Activated CD4-positive, alpha-beta T cell treated with anti-CD3 and anti-CD28 coated beads for 36 hours (primary cell): ENCODE measurements at regions of chr15 and their contacts with region 1.

Region 1: DNA sequence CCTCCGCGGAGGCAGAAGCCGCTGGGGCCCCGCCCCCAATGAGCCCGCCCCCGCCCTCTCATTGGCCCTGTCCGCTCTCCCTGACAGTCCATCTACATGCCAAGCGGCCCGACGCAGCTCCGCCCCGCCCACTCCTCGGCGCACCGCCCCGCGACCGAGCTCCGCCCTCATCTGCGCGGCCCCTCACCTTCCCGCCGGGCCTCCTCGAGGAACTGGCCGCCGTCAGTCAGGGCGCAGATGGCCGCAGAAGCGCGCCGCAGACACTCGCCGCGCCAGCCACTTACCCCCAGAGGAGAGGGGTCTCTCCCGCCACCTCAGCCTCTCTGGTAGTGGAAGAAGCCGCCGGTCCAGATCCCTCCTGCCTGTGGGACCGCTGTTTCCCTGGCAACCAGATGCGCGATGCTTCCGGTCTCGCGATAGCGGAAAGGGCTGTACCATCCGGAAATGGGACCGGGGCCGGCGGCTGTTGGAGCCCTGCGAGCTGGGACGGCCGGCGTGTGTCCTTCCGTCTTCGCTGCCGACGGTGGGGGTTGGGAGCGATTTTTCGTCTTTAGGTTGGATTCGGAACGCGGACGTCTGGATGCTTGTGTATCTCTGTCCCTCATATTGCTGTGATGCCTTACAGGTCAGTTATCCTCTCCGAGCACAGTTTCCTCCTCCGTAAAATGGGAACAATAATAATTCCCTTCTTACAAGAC is at the start of gene FSIP1:
- DNase-seq: peak; percentile 98
- ATAC-seq: peak; percentile 99
- H3K4me3 Mint-ChIP-seq: peak within 1 kb of the TSS; percentile 74
- H3K27ac Mint-ChIP-seq: peak within 1 kb of the TSS; percentile 84
- H3K4me1 Mint-ChIP-seq: peaks cover 46% of the 10 kb centered on the region
- H3K27me3 Mint-ChIP-seq: no peaks in the 10 kb centered on the region
- total RNA-seq, gene FSIP1: 0.25 to 0.32 TPM

Region 2: DNA sequence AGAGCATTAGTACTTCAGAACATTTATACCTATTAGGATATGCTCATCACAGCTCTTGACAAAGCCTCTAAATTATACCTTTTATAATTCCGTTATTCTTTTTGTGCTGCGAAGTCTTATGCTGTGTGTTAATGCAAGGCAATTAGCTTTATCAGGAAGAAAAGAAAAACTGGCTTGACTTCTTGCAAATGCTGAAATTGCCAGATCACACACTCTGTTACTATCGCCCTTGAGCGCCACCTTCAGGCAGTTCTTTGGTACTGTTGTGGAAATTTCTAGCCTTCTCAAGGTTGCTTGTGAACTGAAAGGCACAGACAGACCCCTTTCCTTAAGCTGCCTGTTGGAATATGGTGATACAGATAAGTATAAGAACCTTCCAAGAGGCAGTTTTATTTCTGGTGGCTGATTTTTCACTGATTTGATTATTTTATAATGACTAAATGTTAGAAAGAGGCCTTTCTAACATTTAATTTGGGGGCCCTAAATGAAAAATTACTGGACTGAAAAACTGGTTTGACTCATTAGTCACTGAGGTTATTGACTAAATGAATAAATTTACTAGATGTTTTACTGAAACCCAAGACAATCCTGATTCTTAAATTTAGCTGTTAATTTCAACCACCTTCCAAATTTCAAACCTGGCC is 1091.8 kb before region 1 on chr15:
- CTCF ChIA-PET with region 1: no interaction called
- POLR2A ChIA-PET with region 1: interaction called, 10 read pairs
- intact Hi-C with region 1: no loop called
- DNase-seq: peak; percentile 89
- ATAC-seq: peak; percentile 16
- H3K4me3 Mint-ChIP-seq: no peak overlapping the region
- H3K27ac Mint-ChIP-seq: peak overlapping the region; percentile 42
- H3K4me1 Mint-ChIP-seq: peaks cover 78% of the 10 kb centered on the region
- H3K27me3 Mint-ChIP-seq: no peaks in the 10 kb centered on the region

Region 3: DNA sequence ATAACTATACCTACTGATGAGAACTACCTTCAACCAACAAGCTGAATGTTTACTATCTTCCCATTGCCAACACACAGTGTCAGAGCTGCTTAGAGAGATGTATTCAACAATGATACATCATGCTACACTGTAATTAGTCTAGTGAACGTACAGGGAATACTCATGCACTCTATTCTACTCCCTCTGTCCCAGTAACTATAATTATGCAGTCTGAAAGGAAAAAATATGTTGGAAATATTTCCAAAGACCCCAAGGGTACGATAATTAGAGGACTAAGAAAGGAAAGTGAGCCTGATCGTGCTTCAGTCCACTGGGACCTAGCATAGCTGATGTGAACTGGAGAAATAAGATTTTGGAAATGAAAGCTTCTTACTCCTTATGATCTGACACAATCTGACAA is 36.9 kb after region 1 on chr15:
- CTCF ChIA-PET with region 1: no interaction called
- POLR2A ChIA-PET with region 1: no interaction called
- intact Hi-C with region 1: no loop called
- DNase-seq: no peak
- ATAC-seq: no peak
- H3K4me3 Mint-ChIP-seq: no peak overlapping the region
- H3K27ac Mint-ChIP-seq: no peak overlapping the region
- H3K4me1 Mint-ChIP-seq: no peaks in the 10 kb centered on the region
- H3K27me3 Mint-ChIP-seq: peaks cover 4% of the 10 kb centered on the region

Region 4: GRCh38 chr15:39852250-39852649 is 69.7 kb after region 1 on chr15:
- CTCF ChIA-PET with region 1: no interaction called
- POLR2A ChIA-PET with region 1: no interaction called
- intact Hi-C with region 1: no loop called
- DNase-seq: no peak
- ATAC-seq: no peak
- H3K4me3 Mint-ChIP-seq: no peak overlapping the region
- H3K27ac Mint-ChIP-seq: no peak overlapping the region
- H3K4me1 Mint-ChIP-seq: no peaks in the 10 kb centered on the region
- H3K27me3 Mint-ChIP-seq: peaks cover 7% of the 10 kb centered on the region

Region 5: GRCh38 chr15:39934397-39935071 is 151.9 kb after region 1 on chr15:
- CTCF ChIA-PET with region 1: interaction called, 11 read pairs
- POLR2A ChIA-PET with region 1: no interaction called
- intact Hi-C with region 1: loop called (anchors 1 to 5 kb)
- DNase-seq: peak; percentile 24
- ATAC-seq: no peak
- H3K4me3 Mint-ChIP-seq: peak overlapping the region; percentile 95
- H3K27ac Mint-ChIP-seq: peak overlapping the region; percentile 83
- H3K4me1 Mint-ChIP-seq: peaks cover 41% of the 10 kb centered on the region
- H3K27me3 Mint-ChIP-seq: no peaks in the 10 kb centered on the region

Region 6: GRCh38 chr15:39999538-40000200 is 217.1 kb after region 1 on chr15:
- CTCF ChIA-PET with region 1: no interaction called
- POLR2A ChIA-PET with region 1: no interaction called
- intact Hi-C with region 1: no loop called
- DNase-seq: no peak
- ATAC-seq: no peak
- H3K4me3 Mint-ChIP-seq: no peak overlapping the region
- H3K27ac Mint-ChIP-seq: no peak overlapping the region
- H3K4me1 Mint-ChIP-seq: no peaks in the 10 kb centered on the region
- H3K27me3 Mint-ChIP-seq: no peaks in the 10 kb centered on the region

Region 7: DNA sequence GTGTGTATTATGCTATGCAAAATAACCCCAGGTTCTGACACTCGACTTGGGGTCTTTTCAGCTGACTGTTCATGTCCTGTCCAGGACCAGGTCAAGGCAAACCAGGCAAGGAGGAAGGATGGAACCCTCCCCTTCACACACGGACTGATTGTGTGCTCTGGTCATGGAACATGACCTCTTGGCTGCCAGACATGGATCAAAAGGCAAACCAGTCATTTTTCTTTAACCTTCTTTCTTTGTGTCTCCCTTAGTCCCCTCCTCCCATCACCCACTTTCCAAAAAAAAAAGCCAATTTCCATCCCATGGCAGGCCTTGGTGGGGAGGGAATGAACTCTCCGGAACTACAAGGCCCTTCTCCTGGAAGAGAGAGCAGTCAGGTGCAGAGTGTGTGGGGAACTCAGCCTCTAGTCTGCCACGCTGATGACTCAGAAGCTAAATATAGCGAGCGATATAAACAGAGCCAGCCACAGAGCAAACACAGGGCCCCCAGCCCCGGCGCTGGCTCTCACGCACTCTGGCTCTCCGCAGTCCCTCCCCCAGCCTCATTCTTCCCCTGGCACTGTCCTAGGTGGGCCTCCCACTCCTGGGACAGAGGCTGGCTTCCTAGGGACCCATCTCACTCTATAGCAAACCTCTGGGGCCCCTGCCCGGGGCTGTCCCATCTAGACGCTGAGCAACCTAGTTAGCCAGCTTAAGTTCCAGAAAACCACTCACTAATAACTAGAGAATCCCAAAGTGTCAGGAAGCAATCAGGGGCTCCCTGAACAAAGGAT is 316.1 kb after region 1 on chr15:
- CTCF ChIA-PET with region 1: no interaction called
- POLR2A ChIA-PET with region 1: no interaction called
- intact Hi-C with region 1: loop called in 1 of 2 experiments (anchors 2 kb)
- DNase-seq: peak; percentile 87
- ATAC-seq: peak; percentile 94
- H3K4me3 Mint-ChIP-seq: peak overlapping the region; percentile 65
- H3K27ac Mint-ChIP-seq: peak overlapping the region; percentile 97
- H3K4me1 Mint-ChIP-seq: peaks cover 81% of the 10 kb centered on the region
- H3K27me3 Mint-ChIP-seq: no peaks in the 10 kb centered on the region

Region 8: GRCh38 chr15:40252438-40253166 is 470.0 kb after region 1 on chr15:
- CTCF ChIA-PET with region 1: no interaction called
- POLR2A ChIA-PET with region 1: no interaction called
- intact Hi-C with region 1: no loop called
- DNase-seq: peak; percentile 34
- ATAC-seq: peak; percentile 49
- H3K4me3 Mint-ChIP-seq: peak overlapping the region; percentile 52
- H3K27ac Mint-ChIP-seq: no peak overlapping the region
- H3K4me1 Mint-ChIP-seq: peaks cover 6% of the 10 kb centered on the region
- H3K27me3 Mint-ChIP-seq: peaks cover 27% of the 10 kb centered on the region

Region 9: DNA sequence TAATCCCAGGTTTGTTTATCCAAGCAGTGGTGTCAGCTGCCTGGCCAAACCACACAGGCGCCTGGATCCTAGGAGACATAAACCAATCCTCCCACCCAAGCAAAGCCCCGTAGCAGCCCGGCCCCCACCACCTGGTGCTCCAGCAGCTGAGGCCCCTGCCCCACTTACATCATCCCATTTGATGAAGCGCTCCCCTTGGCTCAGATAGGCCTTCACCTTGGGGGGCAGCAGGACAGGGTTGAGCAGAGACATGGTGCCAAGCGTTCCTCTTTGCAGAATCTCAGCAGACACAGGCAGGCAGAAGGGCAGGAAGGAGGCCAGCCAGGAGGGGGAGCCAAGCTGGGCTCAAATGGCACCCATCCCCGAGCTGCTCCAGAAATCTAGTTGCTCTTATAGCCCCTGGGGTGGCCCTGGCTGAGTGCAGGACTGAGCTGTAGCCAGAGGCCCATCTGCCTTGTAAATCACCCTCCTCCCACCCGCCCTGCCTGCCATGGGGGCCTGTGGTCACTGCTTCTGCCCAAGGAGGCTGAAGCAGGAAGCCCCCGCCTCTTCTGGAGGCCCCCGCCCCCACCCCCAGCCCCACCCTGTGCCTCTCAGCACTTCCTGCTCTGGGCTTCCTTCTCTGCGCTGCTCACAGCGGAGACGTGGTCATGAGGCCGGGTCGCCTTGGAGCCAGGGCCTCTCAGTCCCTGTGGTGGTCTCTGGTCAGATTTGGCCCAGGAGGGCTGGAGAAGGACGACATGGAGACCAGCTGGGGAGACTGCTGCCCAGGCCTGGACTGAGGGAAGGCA is 525.0 kb after region 1 on chr15 and contains the start of gene PLCB2:
- CTCF ChIA-PET with region 1: interaction called, 3 read pairs
- POLR2A ChIA-PET with region 1: no interaction called
- intact Hi-C with region 1: loop called in 1 of 2 experiments (anchors 10 kb)
- DNase-seq: peak; percentile 83
- ATAC-seq: peak; percentile 79
- H3K4me3 Mint-ChIP-seq: peak within 1 kb of the TSS; percentile 91
- H3K27ac Mint-ChIP-seq: peak within 1 kb of the TSS; percentile 97
- H3K4me1 Mint-ChIP-seq: peaks cover 31% of the 10 kb centered on the region
- H3K27me3 Mint-ChIP-seq: no peaks in the 10 kb centered on the region
- total RNA-seq, gene PLCB2: 67.9 to 86.8 TPM

Region 10: GRCh38 chr15:40564591-40565332 is 782.2 kb after region 1 on chr15 and contains the start of gene CCDC32:
- CTCF ChIA-PET with region 1: no interaction called
- POLR2A ChIA-PET with region 1: no interaction called
- intact Hi-C with region 1: loop called in 1 of 2 experiments (anchors 5 kb)
- DNase-seq: peak; percentile 97
- ATAC-seq: peak; percentile 97
- H3K4me3 Mint-ChIP-seq: peak within 1 kb of the TSS; percentile 96
- H3K27ac Mint-ChIP-seq: peak within 1 kb of the TSS; percentile 93
- H3K4me1 Mint-ChIP-seq: peaks cover 44% of the 10 kb centered on the region
- H3K27me3 Mint-ChIP-seq: no peaks in the 10 kb centered on the region
- total RNA-seq, gene CCDC32: 14.2 to 24.5 TPM